ENCODE measurements at regions of chr3 and their contacts with region 1.

Region 1: GRCh38 chr3:30598668-30599545 is 7.5 kb upstream of the TGFBR2 start:
- DNase-seq: peak; percentile 48
- H3K4me3 Mint-ChIP-seq: no peak overlapping the region
- H3K27ac Mint-ChIP-seq: peak overlapping the region; percentile 50
- H3K4me1 Mint-ChIP-seq: peaks cover 52% of the 10 kb centered on the region
- H3K27me3 Mint-ChIP-seq: no peaks in the 10 kb centered on the region

Region 2: GRCh38 chr3:30437171-30437601 is 161.7 kb before region 1 on chr3:
- CTCF ChIA-PET with region 1: no interaction called
- intact Hi-C with region 1: loop called (anchors 2 kb)
- DNase-seq: no peak
- H3K4me3 Mint-ChIP-seq: no peak overlapping the region
- H3K27ac Mint-ChIP-seq: no peak overlapping the region
- H3K4me1 Mint-ChIP-seq: peaks cover 26% of the 10 kb centered on the region
- H3K27me3 Mint-ChIP-seq: no peaks in the 10 kb centered on the region

Region 3: DNA sequence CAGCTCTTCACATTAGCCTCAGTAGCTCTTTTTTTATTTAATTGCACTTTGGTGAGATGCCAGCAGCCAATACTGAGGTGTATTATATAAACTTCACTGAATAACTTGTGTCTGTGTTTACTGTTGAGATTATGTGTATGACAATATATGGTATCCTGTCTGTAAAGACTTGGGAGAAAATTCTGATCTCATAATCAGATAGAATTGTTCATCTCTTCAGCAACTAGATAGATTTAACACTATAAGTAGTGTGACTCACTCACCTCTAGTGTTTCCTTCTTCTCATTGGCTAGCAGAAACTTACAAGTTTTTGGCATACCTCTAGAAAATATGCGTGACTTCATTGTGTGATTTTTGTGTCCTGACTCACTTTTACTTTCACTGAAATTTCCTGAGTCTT is 60.1 kb before region 1 on chr3:
- CTCF ChIA-PET with region 1: no interaction called
- intact Hi-C with region 1: loop called (anchors 2 kb)
- DNase-seq: no peak
- H3K4me3 Mint-ChIP-seq: no peak overlapping the region
- H3K27ac Mint-ChIP-seq: no peak overlapping the region
- H3K4me1 Mint-ChIP-seq: peaks cover 19% of the 10 kb centered on the region
- H3K27me3 Mint-ChIP-seq: no peaks in the 10 kb centered on the region

Region 4: DNA sequence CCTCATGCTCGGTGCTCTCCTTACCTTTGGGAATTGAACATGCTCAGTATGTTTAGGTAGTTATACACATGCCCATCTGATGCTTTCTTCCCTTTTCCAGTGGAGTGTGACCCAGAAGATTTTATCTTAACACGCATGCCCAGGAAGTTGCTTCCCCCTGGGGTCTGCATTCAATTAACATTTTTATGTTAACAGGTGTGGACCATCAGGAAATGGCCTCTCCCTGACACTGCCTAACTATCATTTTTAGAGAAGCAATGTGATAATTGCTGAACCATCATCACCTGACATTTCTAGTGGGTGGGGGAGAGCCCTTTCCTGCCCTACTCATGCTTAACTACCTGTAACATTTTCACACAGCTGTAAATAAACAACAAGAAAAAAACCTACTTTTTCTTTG is 47.6 kb before region 1 on chr3:
- CTCF ChIA-PET with region 1: no interaction called
- intact Hi-C with region 1: loop called (anchors 2 kb)
- DNase-seq: no peak
- H3K4me3 Mint-ChIP-seq: no peak overlapping the region
- H3K27ac Mint-ChIP-seq: no peak overlapping the region
- H3K4me1 Mint-ChIP-seq: peaks cover 33% of the 10 kb centered on the region
- H3K27me3 Mint-ChIP-seq: no peaks in the 10 kb centered on the region

Region 5: GRCh38 chr3:30702828-30703397 is 104.0 kb after region 1 on chr3:
- CTCF ChIA-PET with region 1: no interaction called
- intact Hi-C with region 1: no loop called
- DNase-seq: no peak
- H3K4me3 Mint-ChIP-seq: no peak overlapping the region
- H3K27ac Mint-ChIP-seq: no peak overlapping the region
- H3K4me1 Mint-ChIP-seq: peaks cover 11% of the 10 kb centered on the region
- H3K27me3 Mint-ChIP-seq: no peaks in the 10 kb centered on the region